ENCODE measurements at regions of chr10 and their contacts with region 1.

Region 1: DNA sequence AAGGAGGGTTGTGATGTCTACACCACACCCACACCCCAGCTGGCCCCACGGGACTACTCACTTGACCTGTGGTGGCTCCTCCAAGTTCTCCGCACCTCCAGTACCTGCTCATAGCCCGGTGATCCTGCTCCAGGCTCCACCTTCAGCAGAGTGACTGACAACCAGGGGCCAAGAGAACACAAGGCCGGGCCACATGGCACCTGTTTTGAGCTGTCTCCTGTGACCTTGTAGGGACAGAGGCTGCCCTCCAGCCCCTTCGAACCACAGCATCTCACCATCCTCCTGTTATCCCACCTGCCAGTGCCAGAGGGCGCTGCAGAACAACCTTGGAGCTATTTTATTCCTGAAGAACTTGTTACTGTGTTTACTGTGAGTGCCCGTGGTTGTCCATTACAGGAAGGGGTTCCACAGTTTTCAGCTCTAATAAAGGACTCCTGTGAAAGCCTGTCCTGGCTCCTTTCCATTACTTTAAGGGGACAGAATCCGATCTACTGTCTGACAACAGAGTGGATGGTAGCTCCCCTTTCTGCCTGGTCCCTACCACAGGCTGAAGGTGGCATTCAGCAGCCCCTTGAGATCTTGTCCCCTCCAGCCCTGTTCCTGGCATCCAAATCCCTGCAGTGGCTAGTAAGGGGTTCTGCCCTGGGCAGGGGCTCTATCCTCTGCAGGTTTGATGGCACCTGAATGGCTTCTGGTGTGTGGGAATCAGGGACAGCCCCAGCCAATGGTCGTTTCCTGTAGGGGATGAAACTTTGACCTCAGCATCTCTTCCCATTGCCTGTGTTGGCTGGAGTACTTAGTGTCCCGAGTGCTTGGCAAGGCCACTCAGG is 50.8 kb downstream of the C10orf120 start:
- DNase-seq: peak in 1 of 9 donors; percentile 9
- ATAC-seq: peak; percentile 32
- H3K4me3 ChIP-seq: no peak overlapping the region
- H3K4me3 Mint-ChIP-seq: no peak overlapping the region
- H3K27ac ChIP-seq: no peak overlapping the region
- H3K27ac Mint-ChIP-seq: no peak overlapping the region
- H3K4me1 ChIP-seq: no peaks in the 10 kb centered on the region
- H3K4me1 Mint-ChIP-seq: no peaks in the 10 kb centered on the region
- H3K27me3 ChIP-seq: no peaks in the 10 kb centered on the region
- H3K27me3 Mint-ChIP-seq: peaks cover 14 to 49% (median 16%) of the 10 kb centered on the region in 5 donors

Region 2: GRCh38 chr10:122894261-122894944 is 245.6 kb after region 1 on chr10:
- CTCF ChIA-PET with region 1: no interaction called
- POLR2A ChIA-PET with region 1: no interaction called
- intact Hi-C with region 1: no loop called
- DNase-seq: no peak
- ATAC-seq: no peak
- H3K4me3 ChIP-seq: no peak overlapping the region
- H3K4me3 Mint-ChIP-seq: no peak overlapping the region
- H3K27ac ChIP-seq: no peak overlapping the region
- H3K27ac Mint-ChIP-seq: no peak overlapping the region
- H3K4me1 ChIP-seq: no peaks in the 10 kb centered on the region
- H3K4me1 Mint-ChIP-seq: peaks cover 0 to 5% (median 0%) of the 10 kb centered on the region in 7 donors
- H3K27me3 ChIP-seq: no peaks in the 10 kb centered on the region
- H3K27me3 Mint-ChIP-seq: peaks cover 0 to 8% (median 0%) of the 10 kb centered on the region in 5 donors

Region 3: GRCh38 chr10:122953827-122954730 is 305.3 kb after region 1 on chr10 and contains the start of gene C10orf88:
- CTCF ChIA-PET with region 1: no interaction called
- POLR2A ChIA-PET with region 1: no interaction called
- intact Hi-C with region 1: no loop called
- DNase-seq: peak; percentile 92 to 98 (median 97)
- ATAC-seq: peak; percentile 97
- H3K4me3 ChIP-seq: peak within 1 kb of the TSS; percentile 69
- H3K4me3 Mint-ChIP-seq: peak within 1 kb of the TSS; percentile 85 to 96 (median 90)
- H3K27ac ChIP-seq: peak within 1 kb of the TSS; percentile 72
- H3K27ac Mint-ChIP-seq: peak within 1 kb of the TSS; percentile 77 to 98 (median 90)
- H3K4me1 ChIP-seq: peaks cover 16% of the 10 kb centered on the region in 2 donors
- H3K4me1 Mint-ChIP-seq: peaks cover 26 to 60% (median 39%) of the 10 kb centered on the region in 7 donors
- H3K27me3 ChIP-seq: no peaks in the 10 kb centered on the region
- H3K27me3 Mint-ChIP-seq: peaks cover 0 to 14% (median 0%) of the 10 kb centered on the region in 5 donors
- total RNA-seq, gene C10orf88: 5.2 to 16.8 (median 12.5) TPM

Region 4: GRCh38 chr10:123559066-123559822 is 910.4 kb after region 1 on chr10:
- CTCF ChIA-PET with region 1: no interaction called
- POLR2A ChIA-PET with region 1: no interaction called
- intact Hi-C with region 1: loop called in 1 of 2 experiments (anchors 1 kb)
- DNase-seq: peak; percentile 31 to 76 (median 49)
- ATAC-seq: peak; percentile 78
- H3K4me3 ChIP-seq: no peak overlapping the region
- H3K4me3 Mint-ChIP-seq: no peak overlapping the region
- H3K27ac ChIP-seq: no peak overlapping the region
- H3K27ac Mint-ChIP-seq: peak overlapping the region in 1 of 9 donors; percentile 20
- H3K4me1 ChIP-seq: no peaks in the 10 kb centered on the region
- H3K4me1 Mint-ChIP-seq: peaks cover 0 to 6% (median 0%) of the 10 kb centered on the region in 7 donors
- H3K27me3 ChIP-seq: no peaks in the 10 kb centered on the region
- H3K27me3 Mint-ChIP-seq: peaks cover 3 to 23% (median 20%) of the 10 kb centered on the region in 5 donors